Cardiac septum (tissue), 1 donor: ENCODE measurements at regions of chr19 and their contacts with region 1.

Region 1: DNA sequence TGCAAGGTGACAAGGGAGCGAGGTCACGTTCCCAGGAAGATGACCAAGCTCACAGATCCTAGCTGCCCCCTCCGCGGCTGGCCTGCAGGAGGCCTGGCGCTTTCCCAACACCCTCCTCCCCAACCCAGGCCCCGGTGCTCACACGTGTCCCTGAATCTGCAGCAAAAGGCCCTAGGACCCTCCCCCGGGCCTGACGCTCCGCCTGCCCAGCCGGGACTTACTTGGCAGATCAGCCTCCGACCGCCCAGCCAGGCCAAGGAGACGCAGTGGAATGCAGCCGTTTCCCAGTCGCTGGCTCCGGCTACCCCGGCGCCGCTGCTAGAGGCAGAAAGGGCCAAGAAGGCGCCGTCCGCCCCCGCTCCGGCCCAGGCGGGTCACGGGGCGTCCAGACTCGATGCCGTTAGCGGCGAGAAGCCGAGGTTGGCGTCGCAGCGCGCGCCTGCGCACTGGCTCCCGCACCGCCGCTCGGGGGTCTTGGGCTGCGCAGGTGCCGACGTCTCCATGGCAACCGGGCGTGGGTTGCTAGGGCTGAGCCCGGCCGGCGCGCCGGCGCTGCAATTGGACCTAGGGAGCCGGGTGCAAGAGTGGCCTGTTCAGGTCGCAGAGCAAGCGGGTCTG is at the start of gene PNMA8A:
- DNase-seq: peak; percentile 78
- total RNA-seq, gene PNMA8A: 11.1 TPM

Region 2: DNA sequence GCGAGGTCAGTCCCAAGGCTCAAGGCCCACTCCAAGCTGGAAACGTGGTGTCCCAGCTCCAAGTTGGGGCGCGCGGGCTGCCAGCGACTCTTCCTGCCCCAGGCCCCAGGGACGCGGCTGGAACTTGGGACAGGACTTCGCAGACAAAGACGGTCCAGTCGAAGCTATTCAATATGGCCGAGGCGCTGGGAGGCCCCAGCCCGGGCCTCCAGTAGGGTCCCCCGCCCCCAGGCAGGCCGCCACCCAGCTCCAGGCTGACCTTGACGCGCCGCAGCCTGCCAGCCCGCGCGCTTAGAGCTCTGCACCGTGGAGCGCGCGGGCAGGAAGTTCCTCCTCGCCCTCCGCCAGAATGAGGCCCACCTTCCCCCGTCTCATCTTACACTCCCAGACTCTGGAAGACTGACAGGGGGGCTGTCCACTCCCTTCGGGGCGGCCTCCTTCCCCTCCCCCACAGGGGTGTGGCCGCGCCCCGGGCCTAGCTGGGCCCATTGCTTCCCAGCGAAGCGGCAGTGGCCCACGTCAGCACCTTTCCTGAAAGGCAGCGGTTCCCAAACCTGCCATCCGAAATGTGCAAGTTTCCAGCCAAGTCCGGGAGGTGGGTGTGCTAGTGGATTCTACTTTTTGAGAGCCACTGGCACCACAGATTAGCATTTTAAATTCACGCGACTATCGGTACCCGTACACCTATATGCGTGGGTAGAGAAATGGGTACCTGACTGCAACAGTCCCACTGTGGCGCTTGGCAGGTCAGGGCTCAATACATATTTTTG is 57.8 kb before region 1 on chr19 and contains the start of gene CCDC8:
- intact Hi-C with region 1: loop called (anchors 2 kb)
- DNase-seq: peak; percentile 94
- total RNA-seq, gene CCDC8: 34.2 TPM